ENCODE measurements at regions of chr7 and their contacts with region 1.

Region 1: DNA sequence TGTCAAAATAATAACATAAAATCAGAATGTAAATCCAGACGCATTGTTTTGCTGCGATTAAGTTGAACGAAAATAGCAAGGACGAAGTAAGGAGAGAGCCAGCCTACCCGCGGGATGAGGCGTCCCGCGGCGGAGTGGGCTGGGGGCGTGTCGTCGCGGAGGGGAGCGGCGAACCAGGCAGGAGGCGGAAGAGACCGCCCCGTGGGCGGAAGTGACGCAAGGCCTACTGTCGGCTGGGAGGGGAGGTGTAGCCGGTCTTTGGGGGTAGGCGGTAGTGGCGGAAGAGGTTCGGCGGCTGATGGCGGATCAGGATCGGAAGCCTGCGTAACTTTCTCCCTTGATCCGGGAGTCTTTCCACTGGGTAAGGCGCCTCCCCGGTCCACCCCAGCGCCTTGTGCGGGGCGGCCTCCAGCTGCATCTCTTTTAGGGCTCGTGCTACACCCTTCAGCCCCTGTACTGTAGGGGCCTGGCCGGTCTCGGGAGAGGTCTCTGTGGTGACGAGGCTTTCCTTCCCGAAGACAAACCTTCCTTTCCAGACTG is at the start of gene TAX1BP1:
- DNase-seq: peak; percentile 96 to 98
- ATAC-seq: peak; percentile 89
- total RNA-seq, gene TAX1BP1: 119 to 135 TPM

Region 2: DNA sequence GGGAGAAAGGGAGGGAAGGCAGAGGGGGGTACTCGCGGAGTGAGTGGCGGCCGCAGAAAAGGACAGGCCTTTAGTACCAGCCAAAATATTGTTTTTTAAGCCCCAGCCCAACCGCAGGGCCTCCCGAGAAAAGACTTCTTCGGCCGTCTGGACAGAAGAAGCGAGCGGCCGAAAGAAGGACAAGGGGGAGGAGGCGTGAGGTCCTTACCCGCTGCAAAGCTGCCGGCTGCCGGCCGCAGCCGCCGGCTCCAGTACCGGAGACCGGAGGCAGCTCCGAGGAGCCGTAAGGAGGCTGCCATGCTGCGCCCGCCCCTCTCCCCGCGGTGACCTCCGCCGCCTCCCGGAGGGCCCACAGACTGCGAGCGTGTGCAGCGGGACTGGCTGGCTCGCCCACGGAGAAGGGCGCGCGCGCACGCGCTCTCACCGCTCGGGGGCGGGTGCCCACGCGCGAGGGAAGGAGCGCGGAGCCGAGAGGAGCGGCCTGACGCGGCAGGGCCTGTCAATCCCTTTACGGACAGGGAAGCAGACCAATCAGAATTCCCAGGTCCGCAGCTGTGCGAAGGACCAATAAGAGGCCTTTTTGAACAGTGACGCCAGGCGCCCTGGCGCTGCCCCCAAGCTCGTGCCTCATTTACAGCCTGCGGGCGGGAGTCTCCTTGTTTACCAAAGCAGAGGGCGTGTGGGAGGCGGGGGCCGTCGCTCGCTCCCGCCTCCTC is 77.3 kb before region 1 on chr7 and contains the start of gene HIBADH:
- intact Hi-C with region 1: loop called in 1 of 2 experiments (anchors 5 kb)
- DNase-seq: peak; percentile 97 to 100
- ATAC-seq: peak; percentile 95
- total RNA-seq, gene HIBADH: 25.4 to 38.6 TPM

Region 3: DNA sequence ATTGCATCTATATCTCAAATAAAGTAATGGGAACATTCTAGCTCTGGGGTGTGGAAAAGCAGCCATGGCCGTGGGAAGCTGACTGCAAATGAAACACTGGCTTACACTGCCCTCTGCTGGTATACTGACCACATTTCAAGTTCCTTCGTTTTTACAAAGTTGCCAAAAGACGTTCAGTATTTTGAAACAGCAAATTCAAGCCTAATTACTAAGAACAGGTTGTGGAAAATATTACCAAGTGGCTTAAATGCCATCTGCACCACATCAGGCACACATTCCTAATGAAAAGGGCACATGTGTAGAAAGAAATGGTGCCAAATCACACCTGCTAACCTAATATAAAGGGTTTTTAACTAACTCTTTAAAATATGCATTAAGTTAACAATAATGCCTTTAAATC is 356.7 kb after region 1 on chr7:
- intact Hi-C with region 1: loop called in 1 of 2 experiments (anchors 10 kb)
- DNase-seq: peak in 1 of 2 donors; percentile 31
- ATAC-seq: peak; percentile 66

Measured in left colon (tissue), 2 donors.